AG04450 (cell line): ENCODE measurements at regions of chr3 and their contacts with region 1.

Region 1: GRCh38 chr3:48466386-48467109 is 20.0 kb downstream of the ATRIP start:
- DNase-seq: no peak
- H3K4me3 ChIP-seq: peak overlapping the region; percentile 66
- H3K27ac ChIP-seq: peak overlapping the region; percentile 100
- H3K27me3 ChIP-seq: no peaks in the 10 kb centered on the region
- CTCF ChIP-seq: no peak

Region 2: GRCh38 chr3:48492543-48493501 is 26.3 kb after region 1 on chr3:
- CTCF ChIA-PET with region 1: no interaction called
- POLR2A ChIA-PET with region 1: no interaction called
- DNase-seq: no peak
- H3K4me3 ChIP-seq: no peak overlapping the region
- H3K27ac ChIP-seq: no peak overlapping the region
- H3K27me3 ChIP-seq: no peaks in the 10 kb centered on the region
- CTCF ChIP-seq: no peak

Region 3: GRCh38 chr3:48536785-48537184 is 70.2 kb after region 1 on chr3:
- CTCF ChIA-PET with region 1: no interaction called
- POLR2A ChIA-PET with region 1: interaction called, 11 read pairs
- DNase-seq: no peak
- H3K4me3 ChIP-seq: no peak overlapping the region
- H3K27ac ChIP-seq: no peak overlapping the region
- H3K27me3 ChIP-seq: no peaks in the 10 kb centered on the region
- CTCF ChIP-seq: no peak

Region 4: GRCh38 chr3:48548729-48549705 is 82.5 kb after region 1 on chr3:
- CTCF ChIA-PET with region 1: interaction called, 15 read pairs
- POLR2A ChIA-PET with region 1: interaction called, 6 read pairs
- DNase-seq: no peak
- H3K4me3 ChIP-seq: no peak overlapping the region
- H3K27ac ChIP-seq: no peak overlapping the region
- H3K27me3 ChIP-seq: no peaks in the 10 kb centered on the region
- CTCF ChIP-seq: peak; percentile 97